CD14-positive monocyte (primary cell): ENCODE measurements at regions of chr1 and their contacts with region 1.

Region 1: GRCh38 chr1:53294567-53294966 is 33.3 kb downstream of the LRP8 start:
- DNase-seq: no peak
- H3K4me3 ChIP-seq: no peak overlapping the region
- H3K4me3 Mint-ChIP-seq: no peak overlapping the region
- H3K27ac ChIP-seq: peak overlapping the region in 1 of 2 donors; percentile 1
- H3K27ac Mint-ChIP-seq: peak overlapping the region in 1 of 7 donors; percentile 64
- H3K4me1 ChIP-seq: peaks cover 9 to 11% of the 10 kb centered on the region in 2 donors
- H3K4me1 Mint-ChIP-seq: peaks cover 30% of the 10 kb centered on the region
- H3K27me3 ChIP-seq: no peaks in the 10 kb centered on the region
- H3K27me3 Mint-ChIP-seq: peaks cover 0 to 3% (median 2%) of the 10 kb centered on the region in 3 donors
- CTCF ChIP-seq: no peak

Region 2: GRCh38 chr1:53305650-53306049 is 11.1 kb after region 1 on chr1:
- intact Hi-C with region 1: no loop called
- DNase-seq: no peak
- H3K4me3 ChIP-seq: no peak overlapping the region
- H3K4me3 Mint-ChIP-seq: no peak overlapping the region
- H3K27ac ChIP-seq: no peak overlapping the region
- H3K27ac Mint-ChIP-seq: peak overlapping the region in 4 of 7 donors; percentile 9 to 83 (median 58)
- H3K4me1 ChIP-seq: no peaks in the 10 kb centered on the region
- H3K4me1 Mint-ChIP-seq: no peaks in the 10 kb centered on the region
- H3K27me3 ChIP-seq: no peaks in the 10 kb centered on the region
- H3K27me3 Mint-ChIP-seq: no peaks in the 10 kb centered on the region
- CTCF ChIP-seq: no peak

Region 3: DNA sequence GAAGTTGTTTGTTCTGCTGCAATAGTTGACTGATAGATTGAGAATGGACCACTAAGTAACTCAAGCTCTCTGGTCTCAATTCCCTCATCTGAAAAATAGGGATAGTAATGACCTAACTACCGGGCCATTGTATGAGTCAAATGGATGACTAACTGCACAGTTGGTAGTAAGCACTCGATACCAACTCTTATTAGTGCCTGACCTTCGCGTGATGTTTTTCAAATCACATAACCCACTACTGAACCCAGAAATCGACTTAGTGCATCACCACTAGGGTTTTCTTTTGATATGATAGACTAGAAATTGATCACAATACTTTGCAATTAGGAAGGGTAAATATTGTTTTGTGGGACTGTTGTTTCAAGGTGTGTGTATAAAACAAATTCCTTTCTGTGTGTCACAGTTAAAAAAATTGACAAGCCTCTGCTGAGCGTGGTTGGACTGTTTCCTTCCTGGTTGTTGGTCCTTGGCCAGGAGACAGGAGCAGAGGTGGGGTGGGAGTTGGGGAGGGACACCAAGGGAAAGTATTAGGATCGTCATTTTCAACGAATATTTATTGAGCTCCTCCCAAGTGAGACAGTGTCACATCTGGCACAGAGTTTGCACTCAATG is 87.3 kb after region 1 on chr1:
- intact Hi-C with region 1: loop called in 1 of 2 experiments (anchors 5 kb)
- DNase-seq: no peak
- H3K4me3 ChIP-seq: no peak overlapping the region
- H3K4me3 Mint-ChIP-seq: no peak overlapping the region
- H3K27ac ChIP-seq: no peak overlapping the region
- H3K27ac Mint-ChIP-seq: no peak overlapping the region
- H3K4me1 ChIP-seq: no peaks in the 10 kb centered on the region
- H3K4me1 Mint-ChIP-seq: no peaks in the 10 kb centered on the region
- H3K27me3 ChIP-seq: no peaks in the 10 kb centered on the region
- H3K27me3 Mint-ChIP-seq: peaks cover 4 to 17% (median 6%) of the 10 kb centered on the region in 3 donors
- CTCF ChIP-seq: no peak